Activated naive CD4-positive, alpha-beta T cell treated with anti-CD3 and anti-CD28 coated beads, Interleukin-2, amount 10 ng/mL, durations not matched to agents 7 days and 5 days (primary cell): ENCODE measurements at regions of chr6 and their contacts with region 1.

Region 1: GRCh38 chr6:44151348-44152108 is 7.1 kb upstream of the CAPN11 start:
- DNase-seq: peak; percentile 85
- H3K4me3 Mint-ChIP-seq: no peak overlapping the region
- H3K27ac Mint-ChIP-seq: no peak overlapping the region
- H3K4me1 Mint-ChIP-seq: peaks cover 3% of the 10 kb centered on the region
- H3K27me3 Mint-ChIP-seq: no peaks in the 10 kb centered on the region

Region 2: DNA sequence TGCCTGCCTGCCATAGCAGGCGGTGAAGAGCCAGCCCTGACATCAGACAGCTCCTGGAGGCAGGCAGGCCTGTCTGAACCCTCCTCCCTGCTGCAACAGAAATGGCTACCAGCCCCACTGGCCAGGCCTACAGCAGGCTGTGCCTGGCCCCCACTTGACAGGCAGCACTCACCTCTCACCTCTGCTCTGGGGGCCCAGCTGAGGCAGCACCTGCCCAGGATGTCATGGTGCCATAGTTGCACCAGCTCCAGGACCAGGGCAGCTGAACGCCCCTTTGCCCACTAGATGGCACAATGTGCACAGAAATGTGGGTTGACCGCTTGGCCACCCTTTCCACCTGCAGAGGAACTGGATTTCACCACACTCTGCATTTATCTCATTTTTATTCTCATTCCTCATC is 54.9 kb before region 1 on chr6:
- CTCF ChIA-PET with region 1: interaction called, 37 read pairs
- DNase-seq: peak; percentile 86
- H3K4me3 Mint-ChIP-seq: no peak overlapping the region
- H3K27ac Mint-ChIP-seq: no peak overlapping the region
- H3K4me1 Mint-ChIP-seq: peaks cover under 1% of the 10 kb centered on the region
- H3K27me3 Mint-ChIP-seq: no peaks in the 10 kb centered on the region